Calu3 (cell line): ENCODE measurements at regions of chr3 and their contacts with region 1.

Region 1: GRCh38 chr3:73451306-73451944 is 173.3 kb downstream of the PDZRN3 start:
- DNase-seq: no peak
- H3K4me3 Mint-ChIP-seq: no peak overlapping the region
- H3K27ac Mint-ChIP-seq: no peak overlapping the region
- H3K4me1 Mint-ChIP-seq: no peaks in the 10 kb centered on the region
- H3K27me3 Mint-ChIP-seq: no peaks in the 10 kb centered on the region
- CTCF ChIP-seq: no peak

Region 2: GRCh38 chr3:73490453-73491286 is 39.2 kb after region 1 on chr3:
- CTCF ChIA-PET with region 1: no interaction called
- intact Hi-C with region 1: no loop called
- DNase-seq: no peak
- H3K4me3 Mint-ChIP-seq: no peak overlapping the region
- H3K27ac Mint-ChIP-seq: no peak overlapping the region
- H3K4me1 Mint-ChIP-seq: no peaks in the 10 kb centered on the region
- H3K27me3 Mint-ChIP-seq: peaks cover 18% of the 10 kb centered on the region
- CTCF ChIP-seq: no peak

Region 3: DNA sequence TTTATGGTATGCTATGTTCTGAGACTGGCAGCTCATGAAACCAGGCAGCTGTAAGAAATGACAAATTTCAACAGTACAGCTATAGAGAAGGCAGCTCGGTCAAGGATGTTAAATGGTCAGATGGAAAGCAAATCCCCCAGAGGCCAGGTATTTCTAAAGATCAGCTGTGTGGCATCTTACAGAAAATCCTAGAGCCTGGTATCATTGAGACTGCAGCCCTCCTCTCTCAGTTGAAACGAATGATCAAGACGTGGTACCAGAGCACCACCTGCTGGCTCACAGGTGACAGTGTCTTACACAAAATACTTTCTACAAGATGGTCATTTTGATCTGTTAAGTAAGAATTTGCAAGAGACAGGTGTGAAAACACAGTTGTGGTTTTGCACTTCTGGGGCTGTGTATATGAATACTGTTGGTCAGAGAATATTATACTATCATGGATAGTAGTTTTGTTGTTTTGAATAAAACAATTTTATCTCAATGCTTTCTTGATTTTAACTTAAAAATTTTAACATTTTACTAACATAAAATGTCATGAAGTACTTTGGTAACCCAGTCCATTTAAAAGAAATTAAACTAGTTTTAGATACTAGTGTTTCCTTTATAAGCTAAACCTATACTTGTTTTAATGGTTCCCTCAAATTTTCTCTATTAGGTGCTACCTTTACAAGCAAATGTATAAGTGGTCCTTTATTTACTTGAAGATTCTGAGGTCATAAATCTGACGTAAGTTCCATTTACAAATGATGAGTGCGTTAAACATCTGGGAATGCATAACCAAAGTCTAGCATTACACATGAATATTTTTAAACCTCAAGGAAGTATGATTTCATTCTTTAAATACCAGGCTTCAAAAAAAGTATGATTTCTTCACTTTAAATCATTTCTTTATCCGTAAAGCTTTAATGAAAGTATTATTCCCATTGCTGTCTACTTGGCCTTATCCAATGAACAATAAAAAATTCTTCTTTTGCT is 51.5 kb after region 1 on chr3:
- CTCF ChIA-PET with region 1: interaction called, 3 read pairs
- intact Hi-C with region 1: loop called (anchors 1 kb)
- DNase-seq: peak; percentile 63
- H3K4me3 Mint-ChIP-seq: no peak overlapping the region
- H3K27ac Mint-ChIP-seq: no peak overlapping the region
- H3K4me1 Mint-ChIP-seq: no peaks in the 10 kb centered on the region
- H3K27me3 Mint-ChIP-seq: peaks cover 37% of the 10 kb centered on the region
- CTCF ChIP-seq: peak; percentile 62